Ovary (tissue), 10 donors: ENCODE measurements at regions of chr10 and their contacts with region 1.

Region 1: GRCh38 chr10:3776796-3777571 is 8.0 kb downstream of the KLF6 start:
- DNase-seq: peak in 2 of 5 donors; percentile 43 to 45
- H3K4me3 ChIP-seq: no peak overlapping the region
- H3K27ac ChIP-seq: peak overlapping the region; percentile 6 to 68
- H3K4me1 ChIP-seq: peaks cover 16% of the 10 kb centered on the region
- H3K27me3 ChIP-seq: no peaks in the 10 kb centered on the region
- CTCF ChIP-seq: no peak
- EP300 ChIP-seq: peak; percentile 14
- POLR2A ChIP-seq: no peak

Region 2: GRCh38 chr10:3248888-3249758 is 527.9 kb before region 1 on chr10:
- intact Hi-C with region 1: loop called in 1 of 4 experiments (anchors 10 kb)
- DNase-seq: peak in 1 of 5 donors; percentile 37
- H3K4me3 ChIP-seq: no peak overlapping the region
- H3K27ac ChIP-seq: peak overlapping the region in 1 of 2 donors; percentile 8
- H3K4me1 ChIP-seq: no peaks in the 10 kb centered on the region
- H3K27me3 ChIP-seq: no peaks in the 10 kb centered on the region
- CTCF ChIP-seq: no peak
- EP300 ChIP-seq: no peak
- POLR2A ChIP-seq: no peak